Transverse colon (tissue), 4 donors: ENCODE measurements at regions of chr2 and their contacts with region 1.

Region 1: GRCh38 chr2:234751275-234751973 is 200.4 kb upstream of the SH3BP4 start:
- DNase-seq: no peak
- H3K4me3 ChIP-seq: no peak overlapping the region
- H3K27ac ChIP-seq: no peak overlapping the region
- H3K4me1 ChIP-seq: no peaks in the 10 kb centered on the region
- H3K27me3 ChIP-seq: peaks cover 3% of the 10 kb centered on the region
- CTCF ChIP-seq: no peak
- EP300 ChIP-seq: no peak
- POLR2A ChIP-seq: no peak

Region 2: GRCh38 chr2:233960203-233960602 is 791.2 kb before region 1 on chr2:
- in situ Hi-C with region 1: no loop called
- intact Hi-C with region 1: no loop called
- DNase-seq: no peak
- H3K4me3 ChIP-seq: no peak overlapping the region
- H3K27ac ChIP-seq: no peak overlapping the region
- H3K4me1 ChIP-seq: no peaks in the 10 kb centered on the region
- H3K27me3 ChIP-seq: no peaks in the 10 kb centered on the region
- CTCF ChIP-seq: no peak
- EP300 ChIP-seq: no peak
- POLR2A ChIP-seq: no peak

Region 3: GRCh38 chr2:234632527-234633391 is 118.7 kb before region 1 on chr2:
- in situ Hi-C with region 1: no loop called
- intact Hi-C with region 1: no loop called
- DNase-seq: no peak
- H3K4me3 ChIP-seq: no peak overlapping the region
- H3K27ac ChIP-seq: no peak overlapping the region
- H3K4me1 ChIP-seq: peaks cover 0 to 7% (median 4%) of the 10 kb centered on the region in 4 donors
- H3K27me3 ChIP-seq: no peaks in the 10 kb centered on the region
- CTCF ChIP-seq: no peak
- EP300 ChIP-seq: no peak
- POLR2A ChIP-seq: no peak

Region 4: GRCh38 chr2:236075802-236076201 is 1324.4 kb after region 1 on chr2:
- in situ Hi-C with region 1: no loop called
- intact Hi-C with region 1: loop called (anchors 5 kb)
- DNase-seq: no peak
- H3K4me3 ChIP-seq: no peak overlapping the region
- H3K27ac ChIP-seq: no peak overlapping the region
- H3K4me1 ChIP-seq: peaks cover 0 to 22% (median 15%) of the 10 kb centered on the region in 4 donors
- H3K27me3 ChIP-seq: no peaks in the 10 kb centered on the region
- CTCF ChIP-seq: no peak
- EP300 ChIP-seq: no peak
- POLR2A ChIP-seq: no peak